ENCODE measurements at regions of chr5 and their contacts with region 1.

Region 1: GRCh38 chr5:146426853-146427618 is 20.1 kb upstream of the TCERG1 start:
- DNase-seq: no peak
- H3K4me3 ChIP-seq: no peak overlapping the region
- H3K27ac ChIP-seq: no peak overlapping the region
- H3K4me1 ChIP-seq: no peaks in the 10 kb centered on the region
- H3K27me3 ChIP-seq: peaks cover 4% of the 10 kb centered on the region
- CTCF ChIP-seq: peak; percentile 39 to 70 (median 67)
- POLR2A ChIP-seq: no peak

Region 2: GRCh38 chr5:146283344-146283761 is 143.7 kb before region 1 on chr5:
- intact Hi-C with region 1: loop called in 1 of 2 experiments (anchors 10 kb)
- DNase-seq: no peak
- H3K4me3 ChIP-seq: no peak overlapping the region
- H3K27ac ChIP-seq: no peak overlapping the region
- H3K4me1 ChIP-seq: no peaks in the 10 kb centered on the region
- H3K27me3 ChIP-seq: no peaks in the 10 kb centered on the region
- CTCF ChIP-seq: no peak
- POLR2A ChIP-seq: no peak

Region 3: GRCh38 chr5:146291421-146292074 is 135.5 kb before region 1 on chr5:
- intact Hi-C with region 1: loop called (anchors 5 to 10 kb)
- DNase-seq: peak in 2 of 7 donors; percentile 19 to 23
- H3K4me3 ChIP-seq: no peak overlapping the region
- H3K27ac ChIP-seq: no peak overlapping the region
- H3K4me1 ChIP-seq: peaks cover 0 to 4% of the 10 kb centered on the region in 2 donors
- H3K27me3 ChIP-seq: no peaks in the 10 kb centered on the region
- CTCF ChIP-seq: peak in 5 of 6 experiments; percentile 44 to 58 (median 45)
- POLR2A ChIP-seq: no peak

Region 4: GRCh38 chr5:146560205-146560812 is 133.3 kb after region 1 on chr5:
- intact Hi-C with region 1: no loop called
- DNase-seq: no peak
- H3K4me3 ChIP-seq: no peak overlapping the region
- H3K27ac ChIP-seq: no peak overlapping the region
- H3K4me1 ChIP-seq: no peaks in the 10 kb centered on the region
- H3K27me3 ChIP-seq: no peaks in the 10 kb centered on the region
- CTCF ChIP-seq: no peak
- POLR2A ChIP-seq: no peak